ENCODE measurements at regions of chr2 and their contacts with region 1.

Region 1: DNA sequence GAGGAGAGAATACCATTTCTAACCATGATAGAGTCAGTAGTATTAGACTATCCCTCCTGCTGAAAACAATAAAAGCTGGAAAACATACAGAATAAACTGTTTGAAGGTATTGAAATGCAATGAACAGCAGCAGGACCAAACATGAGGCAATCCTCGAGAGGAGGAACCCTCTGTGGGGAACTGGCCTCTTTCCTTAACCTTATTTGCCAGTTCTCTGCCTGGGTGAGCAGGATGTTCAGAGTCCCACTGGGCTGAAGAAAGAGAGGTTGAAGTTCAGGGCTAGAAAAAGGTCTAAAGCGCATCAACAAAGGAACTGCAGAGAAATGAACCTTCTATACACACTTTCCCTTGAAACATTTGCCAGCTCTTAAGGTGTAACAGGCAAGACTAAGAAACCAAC is 79.8 kb upstream of the FHL2 start:
- DNase-seq: no peak
- H3K4me3 ChIP-seq: no peak overlapping the region
- H3K27ac ChIP-seq: no peak overlapping the region
- H3K4me1 ChIP-seq: no peaks in the 10 kb centered on the region
- H3K27me3 ChIP-seq: no peaks in the 10 kb centered on the region
- CTCF ChIP-seq: no peak
- POLR2A ChIP-seq: no peak

Region 2: DNA sequence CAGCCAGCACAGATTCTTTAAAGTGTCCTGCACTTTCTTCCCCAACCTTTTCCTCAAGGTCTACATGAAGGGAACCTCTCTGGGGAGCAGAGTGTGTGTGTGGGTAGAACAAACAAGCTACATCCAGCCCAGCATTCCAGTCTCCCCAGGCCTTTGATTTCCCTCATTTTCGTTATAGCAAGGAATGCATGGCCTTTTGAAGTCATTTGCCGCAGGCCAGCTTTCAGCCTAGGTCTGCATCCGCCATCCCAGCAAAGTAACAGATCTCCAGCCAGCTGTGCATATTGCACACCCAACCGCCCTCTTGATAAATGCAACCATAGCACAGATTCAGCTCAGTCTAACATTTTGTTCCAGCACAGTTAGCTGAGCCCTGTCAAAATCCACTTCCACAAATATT is 1053.1 kb after region 1 on chr2:
- intact Hi-C with region 1: loop called (anchors 5 kb)
- DNase-seq: no peak
- H3K4me3 ChIP-seq: no peak overlapping the region
- H3K27ac ChIP-seq: no peak overlapping the region
- H3K4me1 ChIP-seq: no peaks in the 10 kb centered on the region
- H3K27me3 ChIP-seq: no peaks in the 10 kb centered on the region
- CTCF ChIP-seq: no peak
- POLR2A ChIP-seq: no peak